A549 (cell line): ENCODE measurements at regions of chr12 and their contacts with region 1.

Region 1: DNA sequence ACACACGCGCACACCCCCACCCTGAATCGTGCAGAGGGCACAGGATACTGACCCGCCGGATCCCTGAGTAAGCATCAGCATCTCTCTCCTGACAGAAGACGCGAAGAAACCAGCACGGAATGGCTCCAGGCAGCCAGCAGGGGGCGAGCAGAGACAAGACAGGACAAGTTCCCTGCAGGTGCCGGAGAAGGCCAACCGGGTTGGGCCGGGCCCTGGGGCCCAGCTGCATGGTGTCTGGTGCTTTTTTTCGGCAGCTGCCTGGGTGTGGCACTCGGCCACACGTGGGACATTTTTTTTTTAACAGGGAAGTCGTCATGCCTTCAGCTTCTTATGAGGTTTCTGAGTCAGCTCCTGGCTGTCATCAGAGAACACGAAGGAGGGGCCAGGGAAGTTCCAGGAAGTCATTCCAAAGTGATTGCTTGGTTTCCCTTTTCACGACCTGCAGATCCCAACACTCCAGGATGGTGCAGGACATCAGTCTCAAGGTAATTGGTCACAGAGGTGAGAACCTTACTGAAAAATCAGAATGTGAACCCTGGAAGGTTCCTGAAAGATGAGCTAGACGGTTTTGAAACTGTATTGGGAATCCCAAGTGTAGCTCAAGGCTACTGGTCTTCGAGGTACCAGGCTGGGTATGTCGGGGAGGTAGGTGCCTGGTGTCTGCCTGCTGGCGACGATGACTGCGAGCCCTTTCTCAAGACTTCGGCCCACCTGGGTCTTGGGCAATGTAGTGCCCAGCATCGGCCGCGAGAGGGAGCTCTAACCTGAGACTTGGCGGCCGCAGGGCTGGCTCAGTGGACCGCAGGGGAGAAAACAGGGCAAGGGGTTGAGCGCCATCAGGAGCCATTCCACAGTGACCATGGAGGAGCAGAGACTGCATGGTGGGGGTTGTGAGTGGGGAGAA is 190.8 kb upstream of the PRMT8 start:
- DNase-seq: peak; percentile 74 to 91
- ATAC-seq: peak; percentile 82 to 89
- H3K4me3 ChIP-seq: peak overlapping the region; percentile 20; the same call in 1 of the 3 replicates
- H3K27ac ChIP-seq: peak overlapping the region; percentile 41 to 76; a peak in 5 of 6 replicates
- H3K4me1 ChIP-seq: peaks cover 11% of the 10 kb centered on the region; the same call in 2 of the 3 replicates
- CTCF ChIP-seq: peak; percentile 74
- EP300 ChIP-seq: no peak
- POLR2A ChIP-seq: no peak
- RAD21 ChIP-seq: peak; percentile 76 to 86

Region 2: DNA sequence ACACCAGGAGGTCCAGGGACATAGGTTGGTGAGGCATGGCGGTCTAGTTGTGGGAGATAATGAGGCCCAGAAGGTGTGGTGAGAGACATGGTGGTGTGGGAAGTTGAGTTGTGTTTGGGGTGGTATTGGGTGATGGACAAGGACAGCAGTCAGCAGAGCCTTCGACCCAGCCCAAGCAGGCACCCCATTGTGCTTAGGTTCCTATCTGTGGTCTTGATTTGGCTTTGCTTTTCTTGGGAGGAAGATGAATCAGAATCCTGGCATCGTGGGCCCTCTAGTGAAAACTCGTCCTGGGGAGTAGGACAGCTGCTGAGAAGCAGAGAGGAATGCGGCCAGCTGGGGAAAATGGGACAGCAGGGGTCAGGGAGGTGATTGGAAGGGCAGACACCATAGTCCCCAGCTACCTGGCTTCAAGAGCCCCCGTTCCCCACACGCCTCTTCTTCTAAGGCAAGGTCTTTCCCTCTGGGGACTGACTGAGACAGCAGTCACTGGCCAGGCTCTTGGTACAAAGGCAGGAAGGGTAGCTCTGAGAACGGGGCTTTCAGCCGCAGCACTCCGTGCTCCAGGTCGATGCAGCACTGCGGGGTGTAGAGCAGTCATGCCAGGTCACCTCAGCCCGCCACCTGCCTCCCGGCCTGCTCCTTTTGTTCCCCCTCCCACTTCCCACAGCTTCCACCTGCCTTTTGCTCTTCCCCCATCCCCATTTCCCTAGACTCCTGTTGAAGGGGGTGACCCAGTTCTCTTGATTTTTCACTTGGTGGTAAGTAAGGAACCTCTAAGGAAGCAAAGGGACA is 473.3 kb before region 1 on chr12:
- CTCF ChIA-PET with region 1: no interaction called
- POLR2A ChIA-PET with region 1: no interaction called
- DNase-seq: no peak
- ATAC-seq: no peak
- H3K4me3 ChIP-seq: no peak overlapping the region
- H3K27ac ChIP-seq: no peak overlapping the region
- H3K4me1 ChIP-seq: no peaks in the 10 kb centered on the region
- CTCF ChIP-seq: no peak
- EP300 ChIP-seq: no peak
- POLR2A ChIP-seq: no peak
- RAD21 ChIP-seq: no peak

Region 3: DNA sequence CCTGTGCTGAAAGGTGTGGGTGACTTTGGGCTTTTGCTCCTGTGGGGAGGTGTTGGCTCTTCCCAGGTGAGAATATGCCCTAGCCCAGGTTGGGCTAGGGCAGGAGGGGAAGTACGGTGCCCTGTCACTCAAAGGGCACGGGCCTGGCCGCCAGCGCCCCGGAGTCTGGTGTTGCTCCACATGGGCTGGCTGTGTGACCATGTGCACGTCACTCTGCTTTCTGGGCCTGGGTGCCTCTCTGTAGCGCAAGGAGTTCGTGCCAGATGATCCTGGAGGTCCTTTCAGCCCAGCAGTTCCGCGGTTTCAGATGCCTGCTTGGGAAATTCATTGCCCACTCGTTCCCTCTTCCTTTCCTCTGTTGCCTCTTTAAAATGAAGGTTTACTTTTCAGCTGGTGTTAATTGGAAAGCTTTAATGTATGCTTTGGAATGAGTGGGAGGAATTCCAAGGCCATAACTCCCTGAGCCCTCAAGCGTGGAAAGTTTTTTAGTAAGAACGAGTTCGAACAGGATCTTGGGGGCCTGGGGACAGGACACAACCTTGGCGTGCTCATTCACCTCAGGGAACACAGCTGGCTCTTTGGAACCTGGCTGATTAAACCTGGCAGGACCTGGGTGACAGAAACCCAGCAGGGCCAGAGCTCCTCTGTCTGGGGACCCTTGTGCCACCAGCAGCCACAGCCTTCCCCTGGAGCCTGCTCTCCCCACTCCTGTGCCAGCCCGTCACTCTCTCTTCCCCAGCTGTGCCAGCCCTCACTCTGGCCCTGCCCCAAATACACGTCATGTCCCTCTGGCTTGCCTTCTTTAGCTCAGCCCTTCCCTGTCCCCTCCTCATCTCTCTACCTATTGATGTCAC is 180.2 kb before region 1 on chr12:
- CTCF ChIA-PET with region 1: no interaction called
- POLR2A ChIA-PET with region 1: no interaction called
- DNase-seq: no peak
- ATAC-seq: 0 out of 6 replicates have a peak, but pooled peaks of 1 of the 2 experiments have one; percentile 14
- H3K4me3 ChIP-seq: no peak overlapping the region
- H3K27ac ChIP-seq: no peak overlapping the region
- H3K4me1 ChIP-seq: no peaks in the 10 kb centered on the region
- CTCF ChIP-seq: no peak
- EP300 ChIP-seq: no peak
- POLR2A ChIP-seq: no peak
- RAD21 ChIP-seq: no peak

Region 4: GRCh38 chr12:3313675-3314663 is 13.8 kb after region 1 on chr12:
- CTCF ChIA-PET with region 1: interaction called, 147 read pairs
- POLR2A ChIA-PET with region 1: interaction called, 11 read pairs
- DNase-seq: peak; percentile 52 to 55
- ATAC-seq: peak; percentile 79 to 92
- H3K4me3 ChIP-seq: no peak overlapping the region
- H3K27ac ChIP-seq: no peak overlapping the region
- H3K4me1 ChIP-seq: no peaks in the 10 kb centered on the region
- CTCF ChIP-seq: peak; percentile 35; the same call in 2 of the 3 replicates
- EP300 ChIP-seq: no peak
- POLR2A ChIP-seq: no peak
- RAD21 ChIP-seq: peak; percentile 31 to 52; a peak in 4 of 5 replicates

Region 5: DNA sequence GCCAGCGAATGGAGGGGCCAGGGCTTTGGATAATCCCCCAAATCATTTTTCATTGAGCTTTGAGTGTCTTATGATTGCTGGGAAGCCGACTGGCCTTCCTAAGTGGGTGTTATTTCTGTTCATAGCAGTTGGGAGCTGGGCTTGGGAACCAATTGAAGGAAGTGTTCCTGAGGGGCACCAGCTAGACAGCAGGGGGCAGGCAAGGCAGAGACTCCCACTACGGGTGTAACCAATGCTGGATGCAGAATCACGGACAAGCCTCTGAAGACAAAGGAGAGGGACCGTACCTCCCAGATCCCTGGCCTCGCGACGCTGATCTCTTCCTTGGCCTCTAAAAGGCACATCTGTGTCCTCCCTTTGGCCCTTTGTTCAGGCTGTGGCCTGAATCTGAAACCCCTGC is 41.9 kb after region 1 on chr12:
- CTCF ChIA-PET with region 1: interaction called, 15 read pairs
- POLR2A ChIA-PET with region 1: no interaction called
- DNase-seq: peak in 1 of 2 experiments; percentile 22
- ATAC-seq: peak; percentile 37 to 80; a peak in 3 of 6 replicates
- H3K4me3 ChIP-seq: no peak overlapping the region
- H3K27ac ChIP-seq: no peak overlapping the region
- H3K4me1 ChIP-seq: no peaks in the 10 kb centered on the region
- CTCF ChIP-seq: no peak
- EP300 ChIP-seq: no peak
- POLR2A ChIP-seq: no peak
- RAD21 ChIP-seq: peak in 1 of 2 experiments; percentile 20; a peak in 2 of 5 replicates

Region 6: GRCh38 chr12:3453990-3454675 is 154.0 kb after region 1 on chr12:
- CTCF ChIA-PET with region 1: interaction called, 19 read pairs
- POLR2A ChIA-PET with region 1: no interaction called
- DNase-seq: peak; percentile 8 to 10
- ATAC-seq: peak; percentile 56 to 59; a peak in 5 of 6 replicates
- H3K4me3 ChIP-seq: no peak overlapping the region
- H3K27ac ChIP-seq: no peak overlapping the region
- H3K4me1 ChIP-seq: no peaks in the 10 kb centered on the region
- CTCF ChIP-seq: no peak
- EP300 ChIP-seq: no peak
- POLR2A ChIP-seq: no peak
- RAD21 ChIP-seq: no peak

Region 7: DNA sequence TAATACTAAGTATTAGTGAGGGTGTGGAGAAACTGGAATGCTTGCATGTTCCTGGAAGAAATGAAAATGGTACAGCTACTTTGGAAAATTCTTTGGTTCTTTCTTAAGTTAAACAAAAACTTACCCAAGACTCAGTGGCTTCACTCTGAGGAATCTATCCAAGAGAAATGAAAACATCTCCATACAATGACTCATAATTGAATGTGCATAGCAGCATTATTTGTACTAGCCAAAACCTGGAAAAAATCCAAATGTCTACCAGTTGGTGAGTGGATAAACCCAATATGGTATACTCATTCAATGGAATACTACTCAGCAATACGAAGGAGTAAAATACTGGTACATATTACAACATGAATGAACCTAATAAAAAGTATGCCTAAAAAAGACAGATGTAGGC is 470.7 kb after region 1 on chr12:
- CTCF ChIA-PET with region 1: interaction called, 89 read pairs
- POLR2A ChIA-PET with region 1: no interaction called
- DNase-seq: peak in 1 of 2 experiments; percentile 49
- ATAC-seq: peak in 1 of 2 experiments; percentile 52; a peak in 2 of 6 replicates
- H3K4me3 ChIP-seq: no peak overlapping the region
- H3K27ac ChIP-seq: no peak overlapping the region
- H3K4me1 ChIP-seq: no peaks in the 10 kb centered on the region
- CTCF ChIP-seq: no peak
- EP300 ChIP-seq: no peak
- POLR2A ChIP-seq: no peak
- RAD21 ChIP-seq: no peak

Region 8: GRCh38 chr12:3803865-3804472 is 503.8 kb after region 1 on chr12:
- CTCF ChIA-PET with region 1: interaction called, 247 read pairs
- POLR2A ChIA-PET with region 1: no interaction called
- DNase-seq: peak; percentile 41 to 79
- ATAC-seq: peak; percentile 88 to 96
- H3K4me3 ChIP-seq: no peak overlapping the region
- H3K27ac ChIP-seq: no peak overlapping the region
- H3K4me1 ChIP-seq: no peaks in the 10 kb centered on the region
- CTCF ChIP-seq: peak; percentile 86
- EP300 ChIP-seq: no peak
- POLR2A ChIP-seq: no peak
- RAD21 ChIP-seq: peak; percentile 86 to 89